Panc1 (cell line): ENCODE measurements at regions of chr14 and their contacts with region 1.

Region 1: DNA sequence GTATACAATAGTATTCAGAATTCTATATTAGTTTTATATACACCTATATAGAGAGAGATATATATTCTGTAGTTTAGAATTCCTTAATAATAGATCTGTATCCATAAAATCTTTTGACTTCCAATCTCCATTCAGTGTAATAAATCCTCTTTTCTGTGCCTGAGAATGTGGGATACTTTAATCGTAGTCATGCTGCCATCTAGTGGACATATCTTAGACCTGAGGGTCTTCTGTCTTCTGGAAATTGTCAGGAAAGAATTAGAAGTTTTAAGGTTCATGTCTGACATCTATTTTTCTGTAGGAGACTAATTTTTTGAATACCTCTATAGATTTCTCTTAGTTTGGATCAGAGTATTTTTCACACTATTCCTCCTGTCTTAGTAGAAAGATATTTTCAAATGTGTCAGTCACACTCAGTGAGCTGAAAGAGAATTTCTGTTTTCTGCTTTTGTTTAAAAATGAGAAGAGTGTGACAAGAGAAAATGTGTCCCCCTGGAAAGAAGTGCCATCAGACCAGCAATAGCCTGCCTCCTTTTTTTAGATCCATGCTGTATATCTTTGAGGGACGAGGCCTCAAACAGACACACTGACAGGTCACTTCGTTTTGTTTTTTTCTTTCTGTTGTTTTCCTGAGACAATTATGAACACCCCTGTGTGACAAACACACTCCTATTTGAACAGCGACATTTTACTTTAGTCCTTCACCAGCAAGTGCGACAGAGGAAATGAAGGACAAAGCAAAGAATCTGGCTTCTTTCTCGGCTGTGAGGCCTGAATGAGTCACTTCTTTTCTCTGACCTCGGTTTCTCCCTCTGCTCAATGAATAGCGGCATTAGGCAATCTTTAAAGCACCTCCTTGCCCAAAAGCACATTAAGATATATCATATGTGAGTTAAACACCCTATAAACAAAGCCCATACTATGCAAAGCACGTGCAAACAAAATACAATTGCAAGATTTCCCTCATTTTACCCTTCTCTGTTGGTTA is 96.3 kb downstream of the GALC start:
- DNase-seq: peak; percentile 12
- ATAC-seq: no peak
- H3K4me3 ChIP-seq: no peak overlapping the region
- H3K27ac ChIP-seq: no peak overlapping the region
- H3K4me1 ChIP-seq: no peaks in the 10 kb centered on the region
- H3K27me3 ChIP-seq: no peaks in the 10 kb centered on the region
- CTCF ChIP-seq: peak; percentile 58; the same call in 1 of the 2 replicates

Region 2: DNA sequence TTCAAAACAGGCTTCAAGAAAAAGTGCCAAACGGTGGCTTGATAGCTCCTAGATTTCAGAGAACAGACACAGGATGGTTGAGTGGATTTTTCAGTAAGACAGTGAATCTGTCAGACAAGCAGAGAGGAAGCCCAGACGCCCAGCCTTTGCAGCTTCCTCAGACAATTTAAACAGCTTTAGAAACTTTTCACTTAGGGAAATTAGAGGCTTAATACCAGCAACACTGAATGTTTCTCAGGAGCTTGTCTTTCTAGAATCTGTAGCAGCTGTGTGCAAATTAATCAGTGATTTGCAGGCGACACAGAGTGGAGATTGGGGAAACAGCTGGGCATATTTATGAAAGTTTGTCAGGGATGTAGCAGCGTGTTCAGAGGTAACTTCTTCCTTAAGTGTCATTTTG is 265.8 kb before region 1 on chr14:
- CTCF ChIA-PET with region 1: no interaction called
- POLR2A ChIA-PET with region 1: no interaction called
- in situ Hi-C with region 1: no loop called
- intact Hi-C with region 1: loop called (anchors 10 kb)
- DNase-seq: no peak
- ATAC-seq: no peak
- H3K4me3 ChIP-seq: no peak overlapping the region
- H3K27ac ChIP-seq: no peak overlapping the region
- H3K4me1 ChIP-seq: no peaks in the 10 kb centered on the region
- H3K27me3 ChIP-seq: no peaks in the 10 kb centered on the region
- CTCF ChIP-seq: no peak

Region 3: GRCh38 chr14:87745507-87746118 is 151.1 kb before region 1 on chr14:
- CTCF ChIA-PET with region 1: no interaction called
- POLR2A ChIA-PET with region 1: no interaction called
- in situ Hi-C with region 1: no loop called
- intact Hi-C with region 1: loop called (anchors 1 kb)
- DNase-seq: peak; percentile 38
- ATAC-seq: no peak
- H3K4me3 ChIP-seq: no peak overlapping the region
- H3K27ac ChIP-seq: no peak overlapping the region
- H3K4me1 ChIP-seq: no peaks in the 10 kb centered on the region
- H3K27me3 ChIP-seq: no peaks in the 10 kb centered on the region
- CTCF ChIP-seq: peak; percentile 71

Region 4: DNA sequence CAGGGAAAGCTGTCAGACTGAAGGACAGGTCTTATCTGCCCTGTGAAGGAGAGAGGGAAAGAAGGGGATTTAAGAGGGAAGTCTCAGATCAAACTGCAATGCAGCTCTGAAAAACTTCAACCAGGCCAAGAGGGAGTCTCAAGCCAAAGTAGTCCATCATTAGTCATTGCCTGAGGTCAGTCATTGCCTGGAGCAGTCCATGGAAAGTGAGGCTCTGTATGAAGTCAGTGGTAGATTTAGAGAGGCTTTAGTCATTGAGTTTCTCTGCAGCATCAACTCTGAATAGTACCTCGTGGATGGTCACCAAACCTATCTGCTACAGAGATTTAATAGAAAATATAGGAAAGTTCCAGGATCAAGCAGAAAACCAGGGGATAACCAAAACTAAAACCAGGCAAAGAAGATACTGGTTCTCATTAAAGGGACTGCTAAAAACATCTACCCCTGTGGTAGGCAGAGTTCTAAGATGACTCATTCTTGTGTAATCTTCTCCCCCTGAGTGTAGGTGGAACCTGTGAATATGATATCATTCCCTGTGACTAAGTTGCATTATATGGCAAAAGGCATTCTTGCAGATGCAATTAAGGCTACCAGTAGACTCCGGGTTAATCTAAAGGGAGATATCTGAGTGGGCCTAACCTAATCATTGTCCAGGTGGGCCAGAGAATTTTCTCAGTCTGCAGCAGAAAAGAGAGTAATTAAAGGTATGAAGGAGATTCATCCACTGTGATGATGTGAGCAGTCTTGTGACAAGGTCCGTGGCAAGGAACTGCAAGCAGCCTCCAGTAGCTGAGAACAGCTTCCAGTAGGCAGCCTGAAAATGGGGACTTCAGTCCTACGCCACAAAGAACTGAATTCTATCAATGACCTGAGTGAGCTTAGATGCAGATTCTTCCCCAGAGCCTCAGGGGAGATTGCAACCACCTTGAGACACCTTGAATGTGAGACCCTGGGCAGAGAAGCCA is 26.8 kb before region 1 on chr14:
- CTCF ChIA-PET with region 1: no interaction called
- POLR2A ChIA-PET with region 1: no interaction called
- in situ Hi-C with region 1: no loop called
- intact Hi-C with region 1: no loop called
- DNase-seq: no peak
- ATAC-seq: no peak
- H3K4me3 ChIP-seq: no peak overlapping the region
- H3K27ac ChIP-seq: no peak overlapping the region
- H3K4me1 ChIP-seq: no peaks in the 10 kb centered on the region
- H3K27me3 ChIP-seq: no peaks in the 10 kb centered on the region
- CTCF ChIP-seq: no peak

Region 5: DNA sequence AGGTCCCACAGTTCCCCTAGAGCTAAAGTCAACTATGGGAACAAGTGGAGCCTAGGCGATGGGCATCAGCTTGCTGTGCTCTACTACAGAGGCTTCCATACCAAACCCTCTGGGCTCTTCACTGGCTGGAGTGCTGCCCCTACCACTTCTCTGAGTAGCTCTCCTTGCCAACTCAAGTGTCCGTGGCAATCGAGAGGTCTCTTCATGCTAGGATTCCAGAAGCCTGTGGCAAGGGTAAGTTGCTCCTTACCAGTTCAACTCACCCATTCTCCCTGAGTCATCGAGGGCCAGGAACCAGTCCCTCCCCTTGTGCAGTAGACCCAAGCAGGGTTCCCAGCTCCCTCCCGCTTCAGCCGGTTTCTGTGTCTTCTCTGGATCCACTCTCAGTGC is 20.2 kb after region 1 on chr14:
- CTCF ChIA-PET with region 1: no interaction called
- POLR2A ChIA-PET with region 1: no interaction called
- in situ Hi-C with region 1: no loop called
- intact Hi-C with region 1: no loop called
- DNase-seq: no peak
- ATAC-seq: no peak
- H3K4me3 ChIP-seq: no peak overlapping the region
- H3K27ac ChIP-seq: no peak overlapping the region
- H3K4me1 ChIP-seq: no peaks in the 10 kb centered on the region
- H3K27me3 ChIP-seq: no peaks in the 10 kb centered on the region
- CTCF ChIP-seq: no peak

Region 6: GRCh38 chr14:87975636-87976035 is 78.9 kb after region 1 on chr14:
- CTCF ChIA-PET with region 1: no interaction called
- POLR2A ChIA-PET with region 1: no interaction called
- in situ Hi-C with region 1: no loop called
- intact Hi-C with region 1: no loop called
- DNase-seq: no peak
- ATAC-seq: no peak
- H3K4me3 ChIP-seq: no peak overlapping the region
- H3K27ac ChIP-seq: no peak overlapping the region
- H3K4me1 ChIP-seq: no peaks in the 10 kb centered on the region
- H3K27me3 ChIP-seq: no peaks in the 10 kb centered on the region
- CTCF ChIP-seq: no peak